ENCODE measurements at regions of chr2 and their contacts with region 1.

Region 1: DNA sequence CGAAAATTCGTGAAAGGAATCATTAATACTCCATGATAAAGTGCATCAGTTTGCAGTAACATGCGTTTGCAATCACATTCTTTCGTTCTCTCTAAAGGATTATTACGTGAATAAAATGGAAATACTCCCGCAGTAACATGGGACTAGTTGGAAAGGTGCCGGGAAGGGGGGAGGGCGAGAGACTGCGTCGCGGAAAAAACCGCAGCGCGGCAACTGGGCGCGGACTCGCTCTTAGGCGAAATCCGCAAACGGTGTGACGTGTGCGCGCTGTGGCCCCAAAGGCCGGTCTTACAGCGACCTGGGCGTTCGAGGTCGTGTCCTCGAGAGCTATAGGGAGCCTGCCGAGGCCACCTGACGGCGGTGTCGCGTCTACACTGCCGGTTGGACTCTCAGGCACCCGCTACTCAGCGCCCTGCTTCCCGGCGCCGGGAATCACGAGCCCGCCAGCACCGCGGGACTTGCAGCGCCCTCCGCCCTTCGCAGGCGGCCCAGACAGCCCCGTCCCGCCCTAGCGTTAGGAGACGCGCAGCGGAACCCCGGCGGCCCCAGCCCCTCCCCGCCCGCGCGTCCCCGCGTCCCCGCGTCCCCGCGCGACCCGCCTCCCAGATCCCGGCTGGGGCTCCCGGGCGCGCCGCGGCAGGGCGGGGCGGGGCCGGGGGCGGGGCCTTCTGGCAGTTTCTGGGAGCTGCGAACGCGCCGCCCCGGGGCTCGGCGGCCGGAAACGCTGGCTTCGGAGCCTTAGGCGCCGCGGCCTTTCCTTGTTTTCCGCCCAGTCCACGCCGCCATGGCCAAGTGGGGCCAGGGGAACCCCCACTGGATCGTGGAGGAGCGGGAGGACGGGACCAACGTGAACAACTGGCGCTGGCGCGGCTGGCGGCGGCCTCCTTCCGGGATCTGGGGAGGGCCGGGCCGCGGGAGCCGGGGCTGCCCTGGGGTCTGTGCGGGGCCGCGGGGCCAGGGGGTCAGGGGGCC is 15.1 kb downstream of the C2orf74 start:
- DNase-seq: peak; percentile 89 to 98
- H3K4me3 ChIP-seq: peak overlapping the region; percentile 79
- CTCF ChIP-seq: peak in 1 of 3 donors; percentile 40
- POLR2A ChIP-seq: peak in 1 of 2 donors; percentile 71

Region 2: DNA sequence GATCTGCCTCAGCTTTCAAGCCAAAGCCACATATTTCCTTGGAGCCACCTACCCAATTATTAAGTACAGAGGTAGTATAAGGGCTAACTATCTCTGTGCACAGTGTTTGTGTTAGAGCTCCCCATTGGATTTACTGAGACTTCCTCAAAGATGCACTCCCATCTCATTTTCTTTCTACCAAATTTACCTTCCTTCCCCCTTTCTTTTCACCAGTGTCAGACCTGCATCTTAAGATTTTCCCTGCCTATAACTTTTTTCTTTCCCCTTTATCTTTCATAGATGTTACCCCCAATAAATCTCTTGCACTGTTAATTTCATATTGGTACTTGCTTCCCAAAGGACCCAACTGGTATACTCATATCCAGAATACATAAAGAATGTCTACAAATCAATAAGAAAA is 301.5 kb before region 1 on chr2:
- intact Hi-C with region 1: loop called (anchors 5 kb)
- DNase-seq: no peak
- H3K4me3 ChIP-seq: no peak overlapping the region
- CTCF ChIP-seq: no peak
- POLR2A ChIP-seq: no peak

Measured in lower leg skin (tissue), 4 donors.